Activated CD4-positive, alpha-beta T cell treated with anti-CD3 and anti-CD28 coated beads for 36 hours (primary cell): ENCODE measurements at regions of chr19 and their contacts with region 1.

Region 1: DNA sequence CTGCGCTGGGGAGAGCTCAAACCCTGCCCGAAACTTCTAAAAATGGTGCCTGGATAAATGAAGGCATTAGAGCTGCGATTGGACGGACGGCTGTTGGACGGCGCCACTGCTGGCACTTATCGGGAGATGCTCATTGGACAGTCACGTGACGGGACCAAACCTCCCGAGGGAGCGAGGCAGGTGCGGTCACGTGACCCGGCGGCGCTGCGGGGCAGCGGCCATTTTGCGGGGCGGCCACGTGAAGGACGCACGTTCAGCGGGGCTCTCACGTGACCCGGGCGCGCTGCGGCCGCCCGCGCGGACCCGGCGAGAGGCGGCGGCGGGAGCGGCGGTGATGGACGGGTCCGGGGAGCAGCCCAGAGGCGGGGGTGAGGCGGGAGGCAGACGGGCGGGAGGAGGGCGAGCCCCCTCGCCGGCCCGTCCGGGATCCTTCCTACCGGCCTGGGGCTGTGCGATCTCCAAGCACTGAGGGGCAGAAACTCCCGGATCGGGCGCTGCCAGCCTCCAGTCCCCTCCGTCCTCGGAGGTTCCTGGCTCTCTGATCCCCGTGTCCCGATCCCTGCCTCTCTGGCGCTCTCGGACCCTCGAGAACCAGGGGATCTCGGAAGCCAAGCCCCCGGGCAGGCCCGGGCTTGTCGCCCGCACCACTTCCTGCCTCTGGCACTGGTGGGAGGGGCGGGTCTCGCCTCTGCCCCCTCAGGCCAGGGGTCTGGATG is at the start of gene BAX:
- DNase-seq: peak; percentile 98
- ATAC-seq: peak; percentile 89
- H3K4me3 Mint-ChIP-seq: peak within 1 kb of the TSS; percentile 74
- H3K27ac Mint-ChIP-seq: peak within 1 kb of the TSS; percentile 87
- H3K4me1 Mint-ChIP-seq: peaks cover 26% of the 10 kb centered on the region
- H3K27me3 Mint-ChIP-seq: no peaks in the 10 kb centered on the region
- total RNA-seq, gene BAX: 128 to 143 TPM

Region 2: GRCh38 chr19:48858984-48859710 is 95.6 kb before region 1 on chr19:
- CTCF ChIA-PET with region 1: no interaction called
- POLR2A ChIA-PET with region 1: no interaction called
- intact Hi-C with region 1: loop called in 1 of 2 experiments (anchors 1 kb)
- DNase-seq: peak; percentile 92
- ATAC-seq: peak; percentile 92
- H3K4me3 Mint-ChIP-seq: peak overlapping the region; percentile 94
- H3K27ac Mint-ChIP-seq: peak overlapping the region; percentile 93
- H3K4me1 Mint-ChIP-seq: peaks cover 7% of the 10 kb centered on the region
- H3K27me3 Mint-ChIP-seq: no peaks in the 10 kb centered on the region

Region 3: DNA sequence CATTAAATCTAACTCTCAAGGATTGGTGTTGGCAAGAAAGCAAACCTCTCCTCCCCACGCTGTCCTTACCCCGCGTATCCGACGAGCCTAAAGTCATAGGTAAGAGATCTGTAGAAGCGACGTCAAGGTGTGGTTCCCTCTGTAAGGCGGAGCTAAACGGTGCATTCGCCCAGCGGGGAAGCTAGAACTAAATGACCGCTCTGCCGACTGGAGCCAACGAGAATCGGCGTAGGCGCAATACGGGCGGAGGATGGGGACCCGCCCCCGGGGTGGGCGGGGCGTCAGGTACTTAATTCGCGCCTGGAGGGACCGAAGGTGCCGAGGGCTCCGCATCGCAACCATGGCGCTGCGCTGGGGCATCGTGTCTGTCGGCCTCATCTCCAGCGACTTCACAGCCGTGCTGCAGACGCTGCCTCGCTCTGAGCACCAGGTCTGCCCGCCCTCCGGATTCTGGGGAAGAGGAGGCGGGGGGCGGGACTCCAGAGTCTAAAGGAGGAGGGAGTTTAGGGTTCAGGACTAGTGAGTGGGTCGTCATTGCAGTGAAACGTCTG is 21.3 kb before region 1 on chr19 and contains the start of gene DHDH:
- CTCF ChIA-PET with region 1: interaction called, 3 read pairs
- POLR2A ChIA-PET with region 1: interaction called, 7 read pairs
- intact Hi-C with region 1: loop called in 1 of 2 experiments (anchors 1 kb)
- DNase-seq: peak; percentile 90
- ATAC-seq: peak; percentile 92
- H3K4me3 Mint-ChIP-seq: peak within 1 kb of the TSS; percentile 74
- H3K27ac Mint-ChIP-seq: peak within 1 kb of the TSS; percentile 48
- H3K4me1 Mint-ChIP-seq: peaks cover 10% of the 10 kb centered on the region
- H3K27me3 Mint-ChIP-seq: peaks cover 2% of the 10 kb centered on the region
- total RNA-seq, gene DHDH: 1.4 to 2.4 TPM

Region 4: GRCh38 chr19:49210108-49210900 is 255.6 kb after region 1 on chr19:
- CTCF ChIA-PET with region 1: no interaction called
- POLR2A ChIA-PET with region 1: no interaction called
- intact Hi-C with region 1: no loop called
- DNase-seq: peak; percentile 80
- ATAC-seq: peak; percentile 96
- H3K4me3 Mint-ChIP-seq: peak overlapping the region; percentile 63
- H3K27ac Mint-ChIP-seq: peak overlapping the region; percentile 58
- H3K4me1 Mint-ChIP-seq: peaks cover 7% of the 10 kb centered on the region
- H3K27me3 Mint-ChIP-seq: peaks cover 2% of the 10 kb centered on the region

Region 5: DNA sequence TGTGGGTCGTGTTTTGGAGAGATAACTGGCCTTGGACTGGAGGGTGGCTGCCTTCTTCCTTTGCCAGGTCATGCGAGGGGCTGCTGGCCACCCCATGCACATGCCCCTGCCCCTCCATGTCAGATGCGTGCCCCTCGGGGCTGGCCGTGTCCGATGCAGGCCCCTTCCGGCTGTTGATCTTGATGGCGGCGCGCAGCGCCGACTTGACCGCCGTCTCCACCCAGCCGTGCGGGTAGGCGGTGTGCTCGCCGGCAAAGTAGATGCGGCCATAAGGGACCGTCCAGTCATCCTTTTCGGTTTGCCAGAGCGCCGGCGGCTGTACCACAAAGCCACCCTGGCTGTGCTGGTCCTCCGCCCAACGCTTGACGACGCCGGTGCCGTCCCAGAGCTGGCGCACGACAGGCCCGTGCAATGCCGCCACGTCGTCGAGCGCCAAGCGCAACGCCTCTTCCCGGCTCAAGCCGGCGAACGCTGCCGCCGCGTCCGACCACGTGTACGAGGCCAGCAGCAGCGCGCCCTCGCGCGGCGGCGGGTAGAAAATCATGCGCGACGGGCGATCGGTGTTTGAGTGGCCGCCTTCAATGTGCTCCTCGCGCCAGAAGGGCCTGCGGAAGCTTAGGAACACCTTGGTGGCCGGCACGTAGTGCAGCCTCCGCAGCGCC is 935.1 kb after region 1 on chr19:
- CTCF ChIA-PET with region 1: no interaction called
- POLR2A ChIA-PET with region 1: no interaction called
- intact Hi-C with region 1: no loop called
- DNase-seq: peak; percentile 89
- ATAC-seq: peak; percentile 61
- H3K4me3 Mint-ChIP-seq: peak overlapping the region; percentile 69
- H3K27ac Mint-ChIP-seq: peak overlapping the region; percentile 70
- H3K4me1 Mint-ChIP-seq: peaks cover 16% of the 10 kb centered on the region
- H3K27me3 Mint-ChIP-seq: no peaks in the 10 kb centered on the region